ENCODE measurements at regions of chr7 and their contacts with region 1.

Region 1: DNA sequence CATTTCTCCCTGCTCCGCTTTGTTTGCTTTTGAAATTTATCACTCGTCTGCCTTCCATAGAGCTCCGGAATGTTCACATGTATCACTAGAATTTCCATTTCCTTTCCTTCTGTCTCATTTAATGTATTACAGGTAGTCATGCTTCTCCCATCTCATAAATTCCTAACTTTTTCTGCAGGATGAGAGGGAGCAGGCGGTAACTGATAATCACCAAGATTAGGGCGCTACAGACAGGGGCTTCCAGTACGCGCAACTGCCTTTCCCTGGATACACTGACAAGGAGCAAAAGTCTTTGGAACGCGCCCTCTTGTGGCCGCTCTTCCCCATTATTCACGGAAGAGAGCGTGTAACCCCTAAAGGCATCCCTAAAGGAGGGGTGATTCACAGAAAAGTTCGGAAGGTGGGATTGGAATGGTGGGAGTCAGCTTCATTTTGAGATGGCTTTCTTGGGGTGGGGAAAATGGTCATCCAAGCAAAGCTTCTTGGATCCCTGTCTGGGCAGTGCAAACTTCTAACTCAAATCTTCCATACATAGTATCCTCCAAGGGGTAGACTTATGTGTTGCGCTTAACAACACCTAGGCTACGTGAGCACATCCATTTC is 6.5 kb downstream of the INHBA start:
- DNase-seq: peak; percentile 58 to 61
- ATAC-seq: peak; percentile 92 to 98
- H3K4me3 ChIP-seq: no peak overlapping the region
- H3K27ac ChIP-seq: no peak overlapping the region
- H3K4me1 ChIP-seq: no peaks in the 10 kb centered on the region
- CTCF ChIP-seq: peak; percentile 75
- EP300 ChIP-seq: no peak
- POLR2A ChIP-seq: no peak
- RAD21 ChIP-seq: peak; percentile 62 to 71

Region 2: DNA sequence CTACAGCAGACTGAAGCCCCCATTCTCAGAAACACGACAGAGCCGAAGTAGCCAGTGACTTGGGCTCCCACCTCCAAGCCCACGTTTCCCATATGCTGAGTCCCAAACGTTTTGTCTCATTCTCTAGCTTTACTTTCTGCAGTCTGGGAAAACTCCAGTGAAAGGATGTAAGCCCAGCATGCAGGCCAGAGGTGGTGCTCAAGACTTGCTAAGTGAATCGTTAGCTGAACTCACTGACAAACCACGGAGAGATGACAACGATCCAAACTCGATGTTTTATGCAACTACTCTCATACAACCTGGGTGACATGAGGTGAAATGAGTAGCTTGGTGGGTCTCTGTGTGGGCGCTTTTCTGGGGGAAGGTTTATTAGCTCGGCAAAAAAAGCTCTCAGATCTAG is 829.8 kb before region 1 on chr7:
- CTCF ChIA-PET with region 1: interaction called, 10 read pairs
- POLR2A ChIA-PET with region 1: no interaction called
- DNase-seq: peak in 1 of 2 experiments; percentile 3
- ATAC-seq: no peak
- H3K4me3 ChIP-seq: no peak overlapping the region
- H3K27ac ChIP-seq: no peak overlapping the region
- H3K4me1 ChIP-seq: no peaks in the 10 kb centered on the region
- CTCF ChIP-seq: no peak
- EP300 ChIP-seq: no peak
- POLR2A ChIP-seq: no peak
- RAD21 ChIP-seq: no peak

Region 3: DNA sequence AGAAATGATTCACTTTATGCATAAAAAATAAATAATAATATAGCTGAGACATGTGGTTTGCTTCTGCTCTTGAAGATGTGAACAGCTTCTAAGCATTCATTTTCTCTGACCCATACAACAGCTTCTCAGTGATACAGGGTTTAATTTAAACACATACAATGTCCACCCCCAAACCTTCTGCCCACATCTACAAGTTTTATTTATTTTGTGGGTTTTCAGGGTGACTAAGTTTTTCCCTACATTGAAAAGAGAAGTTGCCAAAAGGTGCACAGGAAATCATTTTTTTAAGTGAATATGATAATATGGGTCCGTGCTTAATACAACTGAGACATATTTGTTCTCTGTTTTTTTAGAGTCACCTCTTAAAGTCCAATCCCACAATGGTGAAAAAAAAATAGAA is 10.7 kb before region 1 on chr7:
- CTCF ChIA-PET with region 1: interaction called, 15 read pairs
- POLR2A ChIA-PET with region 1: no interaction called
- DNase-seq: no peak
- ATAC-seq: no peak
- H3K4me3 ChIP-seq: no peak overlapping the region
- H3K27ac ChIP-seq: no peak overlapping the region
- H3K4me1 ChIP-seq: no peaks in the 10 kb centered on the region
- CTCF ChIP-seq: no peak
- EP300 ChIP-seq: no peak
- POLR2A ChIP-seq: no peak
- RAD21 ChIP-seq: no peak

Region 4: GRCh38 chr7:41711283-41712064 is 15.1 kb after region 1 on chr7:
- CTCF ChIA-PET with region 1: interaction called, 32 read pairs
- POLR2A ChIA-PET with region 1: no interaction called
- DNase-seq: peak in 1 of 2 experiments; percentile 22
- ATAC-seq: peak in 1 of 2 experiments; percentile 48; a peak in 1 of 6 replicates
- H3K4me3 ChIP-seq: no peak overlapping the region
- H3K27ac ChIP-seq: no peak overlapping the region
- H3K4me1 ChIP-seq: no peaks in the 10 kb centered on the region
- CTCF ChIP-seq: peak; percentile 13; the same call in 2 of the 3 replicates
- EP300 ChIP-seq: no peak
- POLR2A ChIP-seq: no peak
- RAD21 ChIP-seq: 0 out of 5 replicates have a peak, but pooled peaks of 1 of the 2 experiments have one; percentile 18

Region 5: GRCh38 chr7:41911792-41912191 is 215.4 kb after region 1 on chr7:
- CTCF ChIA-PET with region 1: no interaction called
- POLR2A ChIA-PET with region 1: no interaction called
- DNase-seq: no peak
- ATAC-seq: no peak
- H3K4me3 ChIP-seq: no peak overlapping the region
- H3K27ac ChIP-seq: no peak overlapping the region
- H3K4me1 ChIP-seq: peaks cover 10% of the 10 kb centered on the region; the same call in 2 of the 3 replicates
- CTCF ChIP-seq: no peak
- EP300 ChIP-seq: no peak
- POLR2A ChIP-seq: no peak
- RAD21 ChIP-seq: no peak